ENCODE measurements at regions of chr3 and their contacts with region 1.

Region 1: GRCh38 chr3:123201566-123202427 is at the start of gene SEC22A:
- DNase-seq: peak; percentile 88
- ATAC-seq: peak; percentile 96
- H3K4me3 Mint-ChIP-seq: peak within 1 kb of the TSS; percentile 96
- H3K27ac Mint-ChIP-seq: peak within 1 kb of the TSS; percentile 97
- H3K4me1 Mint-ChIP-seq: peaks cover 16% of the 10 kb centered on the region
- H3K27me3 Mint-ChIP-seq: peaks cover under 1% of the 10 kb centered on the region
- CTCF ChIP-seq: no peak
- total RNA-seq, gene SEC22A: 13.5 and 15.9 TPM in 2 replicates

Region 2: DNA sequence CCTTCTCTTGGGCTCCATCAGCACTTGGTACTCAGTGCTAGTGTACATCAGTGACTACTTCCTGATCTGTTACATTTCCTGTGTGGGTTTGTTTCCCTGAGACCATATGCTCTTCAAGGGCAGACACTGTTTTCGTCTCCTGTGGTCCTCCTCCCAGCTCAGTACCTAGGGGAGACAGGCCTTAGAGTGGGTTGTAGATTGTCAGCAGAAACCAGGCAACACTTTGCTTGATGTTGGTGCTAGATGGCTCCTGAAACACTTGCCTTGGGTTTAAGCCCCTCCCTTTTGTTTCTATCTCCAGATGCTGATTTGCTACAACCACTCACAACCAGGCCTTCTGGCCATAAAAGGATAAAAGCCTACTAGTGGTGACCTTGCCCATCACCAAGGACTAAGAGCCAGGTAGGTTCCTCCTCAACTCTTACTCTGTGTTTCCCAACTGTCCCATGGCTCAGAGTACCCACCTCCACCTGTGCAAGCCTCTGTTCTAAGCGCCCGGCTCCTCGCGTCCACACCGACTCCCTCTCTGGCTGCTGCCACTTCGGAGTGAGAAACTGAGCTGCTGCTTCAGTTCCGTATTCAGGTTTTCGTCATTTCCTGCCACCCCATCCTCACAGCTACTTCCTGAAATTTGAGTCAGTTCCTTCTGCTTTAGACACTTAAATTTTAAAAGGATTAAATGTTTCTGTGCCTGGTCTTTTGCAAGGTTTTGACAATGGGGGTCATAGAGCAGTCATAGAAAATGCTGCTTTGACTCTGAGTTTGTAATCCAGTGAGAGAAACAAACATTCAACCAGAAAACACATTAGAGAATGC is 1541.2 kb before region 1 on chr3 and contains the start of gene HCLS1:
- CTCF ChIA-PET with region 1: no interaction called
- POLR2A ChIA-PET with region 1: interaction called, 4 read pairs
- intact Hi-C with region 1: loop called (anchors 5 kb)
- DNase-seq: peak; percentile 73
- ATAC-seq: peak; percentile 85
- H3K4me3 Mint-ChIP-seq: peak within 1 kb of the TSS; percentile 90
- H3K27ac Mint-ChIP-seq: peak within 1 kb of the TSS; percentile 96
- H3K4me1 Mint-ChIP-seq: peaks cover 55% of the 10 kb centered on the region
- H3K27me3 Mint-ChIP-seq: no peaks in the 10 kb centered on the region
- CTCF ChIP-seq: no peak
- total RNA-seq, gene HCLS1: 434 and 440 TPM in 2 replicates

Region 3: GRCh38 chr3:122383771-122384697 is 817.8 kb before region 1 on chr3 and contains the start of gene FAM162A:
- CTCF ChIA-PET with region 1: no interaction called
- POLR2A ChIA-PET with region 1: interaction called, 4 read pairs
- intact Hi-C with region 1: loop called (anchors 2 kb)
- DNase-seq: peak; percentile 93
- ATAC-seq: peak; percentile 94
- H3K4me3 Mint-ChIP-seq: peak within 1 kb of the TSS; percentile 94
- H3K27ac Mint-ChIP-seq: peak within 1 kb of the TSS; percentile 91
- H3K4me1 Mint-ChIP-seq: peaks cover 38% of the 10 kb centered on the region
- H3K27me3 Mint-ChIP-seq: no peaks in the 10 kb centered on the region
- CTCF ChIP-seq: no peak
- total RNA-seq, gene FAM162A: 28.5 and 33.9 TPM in 2 replicates

Region 4: GRCh38 chr3:122642935-122643334 is 558.9 kb before region 1 on chr3:
- CTCF ChIA-PET with region 1: no interaction called
- POLR2A ChIA-PET with region 1: no interaction called
- intact Hi-C with region 1: no loop called
- DNase-seq: no peak
- ATAC-seq: no peak
- H3K4me3 Mint-ChIP-seq: no peak overlapping the region
- H3K27ac Mint-ChIP-seq: no peak overlapping the region
- H3K4me1 Mint-ChIP-seq: peaks cover 30% of the 10 kb centered on the region
- H3K27me3 Mint-ChIP-seq: no peaks in the 10 kb centered on the region
- CTCF ChIP-seq: no peak

Region 5: GRCh38 chr3:122793568-122794416 is 408.0 kb before region 1 on chr3 and contains the start of gene HSPBAP1:
- CTCF ChIA-PET with region 1: no interaction called
- POLR2A ChIA-PET with region 1: interaction called, 3 read pairs
- intact Hi-C with region 1: loop called (anchors 5 kb)
- DNase-seq: peak; percentile 91
- ATAC-seq: peak; percentile 67
- H3K4me3 Mint-ChIP-seq: no peak within 1 kb of the TSS
- H3K27ac Mint-ChIP-seq: peak within 1 kb of the TSS; percentile 86
- H3K4me1 Mint-ChIP-seq: peaks cover 30% of the 10 kb centered on the region
- H3K27me3 Mint-ChIP-seq: no peaks in the 10 kb centered on the region
- CTCF ChIP-seq: no peak
- total RNA-seq, gene HSPBAP1: 18.1 and 20.6 TPM in 2 replicates

Region 6: DNA sequence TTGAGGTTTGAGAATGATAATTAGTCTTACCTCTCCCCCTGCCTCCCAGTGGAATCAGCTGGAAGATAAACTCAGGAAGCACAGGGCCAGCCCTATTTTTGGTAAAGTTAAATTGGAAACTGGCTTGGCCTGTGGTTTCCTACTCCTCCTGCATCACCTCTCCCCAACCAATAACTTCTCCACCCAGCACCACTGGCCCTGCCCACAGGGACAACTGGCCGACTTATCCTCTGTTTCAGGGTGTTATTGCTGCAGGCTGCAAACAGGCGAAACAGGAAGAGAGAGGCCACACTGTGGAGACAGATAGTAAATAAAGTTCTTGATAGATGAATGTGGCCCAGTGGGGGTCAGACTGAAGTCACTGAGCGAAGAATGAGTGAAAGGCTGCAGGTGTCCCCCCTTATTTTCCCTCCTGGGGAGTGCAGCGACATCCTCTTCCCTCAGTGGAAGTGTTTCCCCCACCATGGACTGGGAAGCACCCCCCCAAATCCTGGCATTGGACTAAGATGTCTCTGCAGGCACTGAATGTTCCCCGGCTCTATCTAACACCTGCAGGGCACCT is 87.8 kb before region 1 on chr3:
- CTCF ChIA-PET with region 1: no interaction called
- POLR2A ChIA-PET with region 1: interaction called, 7 read pairs
- intact Hi-C with region 1: loop called (anchors 5 kb)
- DNase-seq: no peak
- ATAC-seq: no peak
- H3K4me3 Mint-ChIP-seq: no peak overlapping the region
- H3K27ac Mint-ChIP-seq: no peak overlapping the region
- H3K4me1 Mint-ChIP-seq: peaks cover 43% of the 10 kb centered on the region
- H3K27me3 Mint-ChIP-seq: no peaks in the 10 kb centered on the region
- CTCF ChIP-seq: no peak

Region 7: GRCh38 chr3:123161167-123161566 is 40.6 kb before region 1 on chr3:
- CTCF ChIA-PET with region 1: no interaction called
- POLR2A ChIA-PET with region 1: no interaction called
- intact Hi-C with region 1: no loop called
- DNase-seq: no peak
- ATAC-seq: no peak
- H3K4me3 Mint-ChIP-seq: no peak overlapping the region
- H3K27ac Mint-ChIP-seq: no peak overlapping the region
- H3K4me1 Mint-ChIP-seq: no peaks in the 10 kb centered on the region
- H3K27me3 Mint-ChIP-seq: no peaks in the 10 kb centered on the region
- CTCF ChIP-seq: no peak

Region 8: GRCh38 chr3:123267821-123268220 is 66.0 kb after region 1 on chr3:
- CTCF ChIA-PET with region 1: no interaction called
- POLR2A ChIA-PET with region 1: no interaction called
- intact Hi-C with region 1: no loop called
- DNase-seq: no peak
- ATAC-seq: no peak
- H3K4me3 Mint-ChIP-seq: no peak overlapping the region
- H3K27ac Mint-ChIP-seq: no peak overlapping the region
- H3K4me1 Mint-ChIP-seq: no peaks in the 10 kb centered on the region
- H3K27me3 Mint-ChIP-seq: no peaks in the 10 kb centered on the region
- CTCF ChIP-seq: no peak